ENCODE measurements at regions of chr6 and their contacts with region 1.

Region 1: GRCh38 chr6:154410619-154411072 is 54.0 kb upstream of the IPCEF1 start:
- DNase-seq: peak; percentile 40
- H3K4me3 ChIP-seq: no peak overlapping the region
- H3K27ac ChIP-seq: peak overlapping the region; percentile 44 to 59
- H3K4me1 ChIP-seq: no peaks in the 10 kb centered on the region
- H3K27me3 ChIP-seq: no peaks in the 10 kb centered on the region
- CTCF ChIP-seq: no peak
- POLR2A ChIP-seq: no peak

Region 2: DNA sequence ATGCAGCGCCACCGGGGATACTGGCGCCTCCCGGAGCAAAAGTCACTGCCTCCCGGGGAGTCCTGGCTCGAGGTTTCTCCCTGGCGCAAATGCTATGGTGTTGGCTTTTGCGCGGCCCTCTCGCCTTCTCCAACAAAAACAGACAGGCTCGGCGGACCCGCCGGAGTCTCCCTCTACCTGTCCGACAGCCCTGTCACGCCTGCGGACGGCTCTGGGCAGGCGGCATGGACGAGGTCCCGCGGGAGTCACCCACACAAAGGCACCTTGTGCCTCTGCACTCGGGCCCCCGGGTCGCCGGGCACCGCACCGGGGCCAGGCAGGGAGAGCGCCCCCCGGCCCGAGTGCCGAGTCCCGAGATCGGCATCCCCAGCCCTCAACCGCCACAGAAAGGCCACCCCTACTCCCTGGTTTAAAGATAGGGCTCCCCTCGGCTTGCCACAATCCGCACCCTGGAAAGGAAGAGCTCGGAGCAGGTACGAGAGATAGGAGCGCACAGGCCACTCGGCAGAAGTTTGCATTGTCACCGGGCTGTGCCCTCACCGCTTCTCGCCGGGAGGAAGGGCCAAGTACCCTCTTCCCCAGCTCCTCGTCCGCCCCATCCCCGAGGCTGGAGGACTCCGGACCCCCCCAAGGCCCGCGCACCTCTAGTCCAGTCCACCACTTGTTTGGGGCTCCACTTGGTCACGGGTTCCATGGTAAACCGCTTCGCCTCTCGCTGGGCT is 98.9 kb after region 1 on chr6:
- intact Hi-C with region 1: loop called (anchors 5 kb)
- DNase-seq: peak; percentile 25
- H3K4me3 ChIP-seq: peak overlapping the region; percentile 65 to 72
- H3K27ac ChIP-seq: peak overlapping the region; percentile 89 to 92
- H3K4me1 ChIP-seq: no peaks in the 10 kb centered on the region
- H3K27me3 ChIP-seq: no peaks in the 10 kb centered on the region
- CTCF ChIP-seq: no peak
- POLR2A ChIP-seq: no peak

Region 3: DNA sequence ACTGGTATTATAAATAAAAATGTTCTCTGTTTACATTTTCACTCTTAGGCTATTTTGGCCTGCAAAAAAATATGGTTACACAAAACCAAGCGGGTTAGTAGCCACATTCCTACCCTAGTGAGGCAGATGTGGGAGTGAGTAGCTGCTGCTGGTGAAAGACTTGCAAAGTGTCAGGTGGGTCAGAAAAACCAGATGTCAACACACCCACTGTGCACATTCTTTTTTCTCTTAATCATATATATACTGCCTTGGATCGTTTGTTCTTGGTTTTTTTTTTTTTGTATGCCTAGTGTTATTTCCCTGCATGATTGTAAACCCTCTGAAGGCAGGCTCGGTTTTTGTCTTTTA is 971.7 kb after region 1 on chr6:
- intact Hi-C with region 1: no loop called
- DNase-seq: no peak
- H3K4me3 ChIP-seq: no peak overlapping the region
- H3K27ac ChIP-seq: no peak overlapping the region
- H3K4me1 ChIP-seq: no peaks in the 10 kb centered on the region
- H3K27me3 ChIP-seq: no peaks in the 10 kb centered on the region
- CTCF ChIP-seq: no peak
- POLR2A ChIP-seq: no peak